ENCODE measurements at regions of chr12 and their contacts with region 1.

Region 1: GRCh38 chr12:10364815-10365622 is 24.8 kb downstream of the KLRK1 start:
- DNase-seq: peak; percentile 87
- ATAC-seq: peak; percentile 68
- H3K4me3 Mint-ChIP-seq: no peak overlapping the region
- H3K27ac Mint-ChIP-seq: no peak overlapping the region
- H3K4me1 Mint-ChIP-seq: peaks cover 23% of the 10 kb centered on the region
- H3K27me3 Mint-ChIP-seq: no peaks in the 10 kb centered on the region

Region 2: GRCh38 chr12:10235761-10236631 is 129.0 kb before region 1 on chr12:
- CTCF ChIA-PET with region 1: interaction called, 32 read pairs
- POLR2A ChIA-PET with region 1: interaction called, 4 read pairs
- DNase-seq: peak; percentile 53
- ATAC-seq: peak; percentile 58
- H3K4me3 Mint-ChIP-seq: no peak overlapping the region
- H3K27ac Mint-ChIP-seq: peak overlapping the region; percentile 40
- H3K4me1 Mint-ChIP-seq: peaks cover 32% of the 10 kb centered on the region
- H3K27me3 Mint-ChIP-seq: no peaks in the 10 kb centered on the region

Region 3: DNA sequence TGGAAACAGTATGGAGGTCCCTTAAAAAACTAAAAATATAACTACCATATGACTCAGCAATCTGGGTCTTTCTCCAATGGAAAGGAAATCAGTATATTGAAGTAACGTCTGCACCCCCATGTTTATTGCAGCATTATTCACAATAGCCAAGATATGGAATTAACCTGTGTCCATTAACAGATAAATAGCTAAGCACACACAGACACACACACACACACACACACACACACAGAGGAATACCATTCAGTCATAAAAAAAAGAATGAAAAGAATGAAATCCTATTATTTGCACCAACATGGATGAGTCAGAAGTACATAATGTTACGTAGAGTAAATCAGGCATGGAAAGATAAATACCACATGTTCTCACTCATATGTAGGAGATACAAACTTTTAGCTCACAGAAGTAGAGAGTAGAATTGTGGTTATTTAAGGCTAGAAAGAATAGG is 20.2 kb after region 1 on chr12:
- CTCF ChIA-PET with region 1: interaction called, 31 read pairs
- POLR2A ChIA-PET with region 1: interaction called, 48 read pairs
- DNase-seq: no peak
- ATAC-seq: peak; percentile 35
- H3K4me3 Mint-ChIP-seq: peak overlapping the region; percentile 70
- H3K27ac Mint-ChIP-seq: peak overlapping the region; percentile 83
- H3K4me1 Mint-ChIP-seq: peaks cover 57% of the 10 kb centered on the region
- H3K27me3 Mint-ChIP-seq: no peaks in the 10 kb centered on the region

Region 4: GRCh38 chr12:10409387-10409786 is 44.4 kb after region 1 on chr12 and contains the start of gene KLRC4:
- CTCF ChIA-PET with region 1: interaction called, 22 read pairs
- POLR2A ChIA-PET with region 1: interaction called, 4 read pairs
- DNase-seq: peak; percentile 49
- ATAC-seq: peak; percentile 63
- H3K4me3 Mint-ChIP-seq: peak within 1 kb of the TSS; percentile 77
- H3K27ac Mint-ChIP-seq: peak within 1 kb of the TSS; percentile 86
- H3K4me1 Mint-ChIP-seq: peaks cover 27% of the 10 kb centered on the region
- H3K27me3 Mint-ChIP-seq: no peaks in the 10 kb centered on the region
- total RNA-seq, gene KLRC4: 3.6 to 4.9 TPM

Region 5: DNA sequence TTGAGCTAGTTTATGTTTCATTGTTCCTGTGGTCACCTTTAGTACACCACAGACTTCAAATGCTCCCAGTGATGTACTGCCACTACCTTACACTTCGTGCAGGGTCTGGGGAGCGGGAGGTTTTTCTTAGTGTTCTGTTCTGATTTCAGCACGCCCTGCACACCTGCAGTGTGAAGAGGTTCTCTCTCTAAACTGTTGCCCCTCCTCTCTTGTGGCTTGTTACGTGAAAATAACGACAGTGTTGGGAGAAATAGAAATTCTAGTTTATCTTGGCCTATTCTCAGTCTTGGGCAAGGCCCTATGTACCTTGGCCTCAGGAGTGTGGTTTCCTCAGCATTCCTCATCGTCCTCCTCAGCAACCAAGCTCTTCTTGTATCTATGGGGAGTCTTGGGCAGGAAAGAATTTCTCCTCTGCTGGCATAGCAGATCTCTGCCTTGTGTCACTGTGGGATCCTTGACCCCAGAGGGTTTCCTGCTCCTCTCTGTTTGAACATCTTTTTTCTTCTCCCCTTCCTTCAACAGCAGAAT is 189.3 kb after region 1 on chr12:
- CTCF ChIA-PET with region 1: interaction called, 9 read pairs
- POLR2A ChIA-PET with region 1: interaction called, 26 read pairs
- DNase-seq: peak; percentile 77
- ATAC-seq: peak; percentile 58
- H3K4me3 Mint-ChIP-seq: peak overlapping the region; percentile 90
- H3K27ac Mint-ChIP-seq: peak overlapping the region; percentile 92
- H3K4me1 Mint-ChIP-seq: peaks cover 49% of the 10 kb centered on the region
- H3K27me3 Mint-ChIP-seq: no peaks in the 10 kb centered on the region

Measured in activated CD8-positive, alpha-beta T cell treated with anti-CD3 and anti-CD28 coated beads, Interleukin-2, amount 10 ng/mL, durations not matched to agents 7 days and 5 days (primary cell).